HepG2 (cell line): ENCODE measurements at regions of chr2 and their contacts with region 1.

Region 1: GRCh38 chr2:112601751-112602150 is 17.3 kb downstream of the CHCHD5 start:
- DNase-seq: no peak
- ATAC-seq: no peak
- H3K4me3 ChIP-seq: no peak overlapping the region
- H3K27ac ChIP-seq: no peak overlapping the region
- H3K4me1 ChIP-seq: peaks cover 20% of the 10 kb centered on the region
- H3K27me3 ChIP-seq: peaks cover 0 to 1% of the 10 kb centered on the region in 2 experiments; a peak in 1 of 5 replicates
- CTCF ChIP-seq: no peak
- EP300 ChIP-seq: no peak
- POLR2A ChIP-seq: no peak
- RAD21 ChIP-seq: no peak

Region 2: DNA sequence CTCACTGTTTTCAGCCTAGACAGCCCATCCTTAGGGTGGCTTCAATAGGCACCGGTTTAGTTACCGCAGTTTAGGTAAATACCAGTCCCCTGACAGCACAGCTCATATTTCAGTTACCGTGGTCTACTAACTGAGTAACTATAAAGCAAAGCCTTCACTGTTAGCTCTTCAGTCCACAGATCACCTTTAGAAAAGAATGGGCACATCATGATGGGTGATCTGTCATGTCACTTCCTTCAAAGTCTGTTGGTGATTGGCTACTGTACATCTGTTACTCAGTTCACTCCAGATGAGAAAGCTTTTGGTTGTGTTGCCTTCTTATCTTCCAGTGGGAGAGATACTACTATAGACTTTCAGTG is 65.0 kb after region 1 on chr2:
- CTCF ChIA-PET with region 1: no interaction called
- POLR2A ChIA-PET with region 1: no interaction called
- in situ Hi-C with region 1: no loop called
- intact Hi-C with region 1: no loop called
- DNase-seq: peak; percentile 74
- ATAC-seq: peak; percentile 69
- H3K4me3 ChIP-seq: no peak overlapping the region
- H3K27ac ChIP-seq: no peak overlapping the region
- H3K4me1 ChIP-seq: peaks cover 30% of the 10 kb centered on the region
- H3K27me3 ChIP-seq: no peaks in the 10 kb centered on the region
- CTCF ChIP-seq: no peak
- EP300 ChIP-seq: no peak
- POLR2A ChIP-seq: no peak
- RAD21 ChIP-seq: no peak

Region 3: DNA sequence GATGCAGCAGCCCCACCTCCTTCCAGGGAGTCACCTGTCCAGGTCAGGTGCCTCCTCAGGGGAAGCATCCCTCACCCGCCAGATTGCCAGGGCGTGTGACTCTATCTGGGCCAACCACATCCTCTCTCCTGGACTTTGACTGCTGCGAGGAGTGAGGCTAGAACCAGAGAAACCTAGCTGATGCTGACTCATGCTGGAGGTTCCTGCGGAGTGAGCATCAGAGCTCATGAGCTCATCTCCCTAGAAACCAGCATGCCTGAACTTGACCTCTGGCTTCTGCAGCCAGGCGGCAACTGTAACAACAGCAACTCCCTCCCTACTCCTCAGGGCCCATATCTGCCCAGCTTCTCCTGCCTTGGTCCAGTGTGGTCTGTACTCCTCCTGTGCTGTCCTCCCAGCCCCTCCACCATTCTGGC is 90.8 kb after region 1 on chr2:
- CTCF ChIA-PET with region 1: interaction called, 11 read pairs
- POLR2A ChIA-PET with region 1: no interaction called
- in situ Hi-C with region 1: no loop called
- intact Hi-C with region 1: loop called (anchors 1 kb)
- DNase-seq: peak; percentile 96
- ATAC-seq: peak; percentile 92
- H3K4me3 ChIP-seq: no peak overlapping the region
- H3K27ac ChIP-seq: no peak overlapping the region
- H3K4me1 ChIP-seq: peaks cover 52% of the 10 kb centered on the region
- H3K27me3 ChIP-seq: no peaks in the 10 kb centered on the region
- CTCF ChIP-seq: peak; percentile 33
- EP300 ChIP-seq: peak; percentile 48 to 55; a peak in 1 of 4 replicates
- POLR2A ChIP-seq: no peak
- RAD21 ChIP-seq: no peak